Mucosa of descending colon (tissue), 3 donors: ENCODE measurements at regions of chr7 and their contacts with region 1.

Region 1: GRCh38 chr7:143240291-143241168 is 18.7 kb downstream of the TAS2R40 start:
- DNase-seq: peak in 2 of 3 donors; percentile 58 to 85
- ATAC-seq: peak; percentile 64
- H3K4me3 ChIP-seq: no peak overlapping the region
- H3K4me1 ChIP-seq: peaks cover 19% of the 10 kb centered on the region
- CTCF ChIP-seq: peak; percentile 71

Region 2: DNA sequence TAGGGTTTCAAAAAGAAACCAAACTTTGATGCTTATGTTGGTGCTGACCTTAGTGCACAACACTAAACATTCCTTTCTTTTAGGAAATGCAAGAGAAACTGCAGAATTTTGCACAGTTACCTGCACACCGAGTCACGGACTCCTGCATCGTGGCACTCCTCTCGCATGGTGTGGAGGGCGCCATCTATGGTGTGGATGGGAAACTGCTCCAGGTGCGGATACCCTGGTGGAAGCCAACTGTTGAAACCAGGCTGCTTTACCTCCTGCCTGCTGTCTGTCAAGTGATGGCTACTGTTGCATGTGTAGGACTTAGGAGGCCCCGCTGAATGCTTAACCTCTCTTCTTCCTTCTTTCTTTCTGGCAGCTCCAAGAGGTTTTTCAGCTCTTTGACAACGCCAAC is 59.3 kb after region 1 on chr7:
- intact Hi-C with region 1: loop called (anchors 2 to 10 kb)
- DNase-seq: peak in 2 of 3 donors; percentile 69 to 72
- ATAC-seq: peak; percentile 84
- H3K4me3 ChIP-seq: no peak overlapping the region
- H3K4me1 ChIP-seq: peaks cover 2% of the 10 kb centered on the region
- CTCF ChIP-seq: peak; percentile 60

Region 3: GRCh38 chr7:143305423-143306070 is 65.0 kb after region 1 on chr7:
- intact Hi-C with region 1: loop called in 1 of 2 experiments (anchors 2 kb)
- DNase-seq: peak; percentile 83 to 96 (median 92)
- ATAC-seq: peak; percentile 95
- H3K4me3 ChIP-seq: no peak overlapping the region
- H3K4me1 ChIP-seq: peaks cover 2% of the 10 kb centered on the region
- CTCF ChIP-seq: peak; percentile 59

Region 4: DNA sequence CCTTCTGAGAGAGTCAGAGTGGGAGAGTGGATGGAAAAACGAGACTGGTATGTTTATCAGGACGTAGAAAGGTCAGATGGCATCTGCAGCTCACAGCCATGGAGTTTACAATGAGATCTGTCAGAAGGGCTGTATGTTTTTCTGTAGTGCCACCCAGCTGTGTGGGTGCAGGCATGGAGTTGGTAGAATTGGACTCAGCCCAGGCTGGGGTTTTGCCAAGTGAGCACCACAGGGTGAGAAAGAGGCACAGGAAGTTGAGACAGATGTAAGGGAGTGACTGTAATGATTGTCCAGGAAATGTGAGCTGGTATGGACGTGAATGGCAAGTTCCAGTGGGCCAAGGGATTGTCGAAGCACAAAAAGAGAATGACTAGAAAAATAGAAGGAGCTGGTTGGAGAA is 131.5 kb after region 1 on chr7:
- intact Hi-C with region 1: loop called in 1 of 2 experiments (anchors 10 kb)
- DNase-seq: peak; percentile 88 to 92 (median 89)
- ATAC-seq: peak; percentile 77
- H3K4me3 ChIP-seq: no peak overlapping the region
- H3K4me1 ChIP-seq: peaks cover 28% of the 10 kb centered on the region
- CTCF ChIP-seq: no peak

Region 5: GRCh38 chr7:143391462-143392404 is 151.2 kb after region 1 on chr7:
- intact Hi-C with region 1: no loop called
- DNase-seq: peak in 2 of 3 donors; percentile 66 to 73
- ATAC-seq: peak; percentile 44
- H3K4me3 ChIP-seq: no peak overlapping the region
- H3K4me1 ChIP-seq: peaks cover 2% of the 10 kb centered on the region
- CTCF ChIP-seq: no peak

Region 6: GRCh38 chr7:143416565-143417149 is 176.1 kb after region 1 on chr7:
- intact Hi-C with region 1: loop called in 1 of 2 experiments (anchors 5 kb)
- DNase-seq: peak in 1 of 3 donors; percentile 56
- ATAC-seq: peak; percentile 67
- H3K4me3 ChIP-seq: no peak overlapping the region
- H3K4me1 ChIP-seq: no peaks in the 10 kb centered on the region
- CTCF ChIP-seq: peak; percentile 49